Activated B cell treated with CpG ODN at 0.5 μM for 24 hours (primary cell): ENCODE measurements at regions of chr9 and their contacts with region 1.

Region 1: GRCh38 chr9:109320742-109321448 is at the start of gene EPB41L4B:
- DNase-seq: peak; percentile 81
- ATAC-seq: peak; percentile 96
- H3K4me3 Mint-ChIP-seq: peak within 1 kb of the TSS; percentile 83
- H3K27ac Mint-ChIP-seq: no peak within 1 kb of the TSS
- H3K4me1 Mint-ChIP-seq: peaks cover 19% of the 10 kb centered on the region
- H3K27me3 Mint-ChIP-seq: peaks cover 57% of the 10 kb centered on the region
- CTCF ChIP-seq: peak; percentile 60
- total RNA-seq, gene EPB41L4B: 5.3 and 6.1 TPM in 2 replicates

Region 2: GRCh38 chr9:107465467-107466451 is 1855.1 kb before region 1 on chr9:
- CTCF ChIA-PET with region 1: no interaction called
- POLR2A ChIA-PET with region 1: no interaction called
- intact Hi-C with region 1: loop called (anchors 10 kb)
- DNase-seq: peak; percentile 50
- ATAC-seq: peak; percentile 90
- H3K4me3 Mint-ChIP-seq: peak overlapping the region; percentile 67
- H3K27ac Mint-ChIP-seq: no peak overlapping the region
- H3K4me1 Mint-ChIP-seq: peaks cover 8% of the 10 kb centered on the region
- H3K27me3 Mint-ChIP-seq: peaks cover 30% of the 10 kb centered on the region
- CTCF ChIP-seq: no peak

Region 3: GRCh38 chr9:109012876-109013678 is 307.8 kb before region 1 on chr9 and contains the start of gene CTNNAL1:
- CTCF ChIA-PET with region 1: no interaction called
- POLR2A ChIA-PET with region 1: no interaction called
- intact Hi-C with region 1: loop called (anchors 10 kb)
- DNase-seq: peak; percentile 88
- ATAC-seq: peak; percentile 96
- H3K4me3 Mint-ChIP-seq: peak within 1 kb of the TSS; percentile 92
- H3K27ac Mint-ChIP-seq: peak within 1 kb of the TSS; percentile 72
- H3K4me1 Mint-ChIP-seq: peaks cover 38% of the 10 kb centered on the region
- H3K27me3 Mint-ChIP-seq: peaks cover 9% of the 10 kb centered on the region
- CTCF ChIP-seq: no peak
- total RNA-seq, gene CTNNAL1: 1.9 and 2.4 TPM in 2 replicates

Region 4: GRCh38 chr9:109182940-109183798 is 137.7 kb before region 1 on chr9:
- CTCF ChIA-PET with region 1: no interaction called
- POLR2A ChIA-PET with region 1: no interaction called
- intact Hi-C with region 1: loop called (anchors 2 kb)
- DNase-seq: no peak
- ATAC-seq: no peak
- H3K4me3 Mint-ChIP-seq: no peak overlapping the region
- H3K27ac Mint-ChIP-seq: no peak overlapping the region
- H3K4me1 Mint-ChIP-seq: no peaks in the 10 kb centered on the region
- H3K27me3 Mint-ChIP-seq: peaks cover 7% of the 10 kb centered on the region
- CTCF ChIP-seq: no peak

Region 5: GRCh38 chr9:109440797-109441287 is 119.9 kb after region 1 on chr9:
- CTCF ChIA-PET with region 1: no interaction called
- POLR2A ChIA-PET with region 1: no interaction called
- intact Hi-C with region 1: loop called (anchors 1 kb)
- DNase-seq: no peak
- ATAC-seq: peak; percentile 78
- H3K4me3 Mint-ChIP-seq: no peak overlapping the region
- H3K27ac Mint-ChIP-seq: no peak overlapping the region
- H3K4me1 Mint-ChIP-seq: peaks cover 23% of the 10 kb centered on the region
- H3K27me3 Mint-ChIP-seq: peaks cover 24% of the 10 kb centered on the region
- CTCF ChIP-seq: no peak